GM12878 (cell line): ENCODE measurements at regions of chr2 and their contacts with region 1.

Region 1: DNA sequence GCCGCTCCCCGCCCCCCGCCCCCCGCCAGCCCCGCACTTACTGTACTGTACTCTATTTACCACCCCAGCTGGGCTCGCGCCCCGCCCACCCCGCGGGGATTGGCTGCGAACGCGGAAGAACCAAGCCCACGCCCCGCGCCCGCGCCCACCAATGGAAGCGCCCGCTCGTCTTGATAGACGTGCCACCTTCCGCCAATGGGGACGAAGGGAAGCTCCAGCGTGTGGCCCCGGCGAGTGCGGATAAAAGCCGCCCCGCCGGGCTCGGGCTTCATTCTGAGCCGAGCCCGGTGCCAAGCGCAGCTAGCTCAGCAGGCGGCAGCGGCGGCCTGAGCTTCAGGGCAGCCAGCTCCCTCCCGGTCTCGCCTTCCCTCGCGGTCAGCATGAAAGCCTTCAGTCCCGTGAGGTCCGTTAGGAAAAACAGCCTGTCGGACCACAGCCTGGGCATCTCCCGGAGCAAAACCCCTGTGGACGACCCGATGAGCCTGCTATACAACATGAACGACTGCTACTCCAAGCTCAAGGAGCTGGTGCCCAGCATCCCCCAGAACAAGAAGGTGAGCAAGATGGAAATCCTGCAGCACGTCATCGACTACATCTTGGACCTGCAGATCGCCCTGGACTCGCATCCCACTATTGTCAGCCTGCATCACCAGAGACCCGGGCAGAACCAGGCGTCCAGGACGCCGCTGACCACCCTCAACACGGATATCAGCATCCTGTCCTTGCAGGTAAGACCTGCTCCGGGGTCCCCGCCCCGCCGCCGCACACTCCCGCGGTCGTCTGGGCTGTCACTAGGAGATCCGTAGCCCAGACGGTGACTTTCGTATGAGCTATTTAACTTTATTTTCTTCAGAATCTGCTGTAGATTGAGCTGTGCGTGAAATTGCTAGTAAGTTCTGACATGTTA is at the start of gene ID2:
- DNase-seq: peak; percentile 88
- ATAC-seq: peak; percentile 64
- H3K4me3 ChIP-seq: peak within 1 kb of the TSS; percentile 80
- H3K27ac ChIP-seq: peak within 1 kb of the TSS; percentile 71
- H3K4me1 ChIP-seq: peaks cover 23% of the 10 kb centered on the region
- H3K27me3 ChIP-seq: peaks cover 0 to 8% of the 10 kb centered on the region in 2 experiments; a peak in 1 of 4 replicates
- CTCF ChIP-seq: no peak
- EP300 ChIP-seq: no peak
- POLR2A ChIP-seq: peak; percentile 99
- RAD21 ChIP-seq: no peak
- polyA plus RNA-seq, gene ID2: 77.3 to 82.5 TPM

Region 2: GRCh38 chr2:7097348-7097895 is 1584.6 kb before region 1 on chr2:
- CTCF ChIA-PET with region 1: no interaction called
- POLR2A ChIA-PET with region 1: no interaction called
- RAD21 ChIA-PET with region 1: no interaction called
- SMC1A ChIA-PET with region 1: no interaction called
- in situ Hi-C with region 1: loop called (anchors 10 kb)
- intact Hi-C with region 1: loop called (anchors 5 kb)
- DNase-seq: peak; percentile 35
- ATAC-seq: peak; percentile 98
- H3K4me3 ChIP-seq: peak overlapping the region; percentile 48; the same call in 1 of the 2 replicates
- H3K27ac ChIP-seq: no peak overlapping the region
- H3K4me1 ChIP-seq: peaks cover 4% of the 10 kb centered on the region; the same call in 1 of the 2 replicates
- H3K27me3 ChIP-seq: no peaks in the 10 kb centered on the region
- CTCF ChIP-seq: peak; percentile 97 to 99 (median 98); a peak in 5 of 6 replicates
- EP300 ChIP-seq: no peak
- POLR2A ChIP-seq: no peak
- RAD21 ChIP-seq: peak; percentile 84

Region 3: GRCh38 chr2:8004250-8004681 is 677.8 kb before region 1 on chr2:
- CTCF ChIA-PET with region 1: no interaction called
- POLR2A ChIA-PET with region 1: no interaction called
- RAD21 ChIA-PET with region 1: no interaction called
- SMC1A ChIA-PET with region 1: no interaction called
- in situ Hi-C with region 1: loop called (anchors 5 kb)
- intact Hi-C with region 1: loop called (anchors 5 kb)
- DNase-seq: no peak
- ATAC-seq: peak; percentile 46
- H3K4me3 ChIP-seq: no peak overlapping the region
- H3K27ac ChIP-seq: no peak overlapping the region
- H3K4me1 ChIP-seq: peaks cover 4% of the 10 kb centered on the region; the same call in 1 of the 2 replicates
- H3K27me3 ChIP-seq: no peaks in the 10 kb centered on the region
- CTCF ChIP-seq: no peak
- EP300 ChIP-seq: peak; percentile 69 to 79; a peak in 2 of 4 replicates
- POLR2A ChIP-seq: no peak
- RAD21 ChIP-seq: no peak

Region 4: GRCh38 chr2:8312861-8313830 is 368.9 kb before region 1 on chr2:
- CTCF ChIA-PET with region 1: interaction called, 3 read pairs
- POLR2A ChIA-PET with region 1: interaction called, 8 read pairs
- RAD21 ChIA-PET with region 1: interaction called, 26 read pairs
- SMC1A ChIA-PET with region 1: interaction called, 9 read pairs
- in situ Hi-C with region 1: no loop called
- intact Hi-C with region 1: loop called (anchors 1 kb)
- DNase-seq: peak; percentile 96
- ATAC-seq: peak; percentile 81
- H3K4me3 ChIP-seq: no peak overlapping the region; the same call in 1 of the 2 replicates
- H3K27ac ChIP-seq: peak overlapping the region; percentile 72
- H3K4me1 ChIP-seq: peaks cover 53% of the 10 kb centered on the region
- H3K27me3 ChIP-seq: no peaks in the 10 kb centered on the region
- CTCF ChIP-seq: no peak
- EP300 ChIP-seq: peak; percentile 46 to 86; a peak in 3 of 4 replicates
- POLR2A ChIP-seq: no peak
- RAD21 ChIP-seq: peak; percentile 29

Region 5: DNA sequence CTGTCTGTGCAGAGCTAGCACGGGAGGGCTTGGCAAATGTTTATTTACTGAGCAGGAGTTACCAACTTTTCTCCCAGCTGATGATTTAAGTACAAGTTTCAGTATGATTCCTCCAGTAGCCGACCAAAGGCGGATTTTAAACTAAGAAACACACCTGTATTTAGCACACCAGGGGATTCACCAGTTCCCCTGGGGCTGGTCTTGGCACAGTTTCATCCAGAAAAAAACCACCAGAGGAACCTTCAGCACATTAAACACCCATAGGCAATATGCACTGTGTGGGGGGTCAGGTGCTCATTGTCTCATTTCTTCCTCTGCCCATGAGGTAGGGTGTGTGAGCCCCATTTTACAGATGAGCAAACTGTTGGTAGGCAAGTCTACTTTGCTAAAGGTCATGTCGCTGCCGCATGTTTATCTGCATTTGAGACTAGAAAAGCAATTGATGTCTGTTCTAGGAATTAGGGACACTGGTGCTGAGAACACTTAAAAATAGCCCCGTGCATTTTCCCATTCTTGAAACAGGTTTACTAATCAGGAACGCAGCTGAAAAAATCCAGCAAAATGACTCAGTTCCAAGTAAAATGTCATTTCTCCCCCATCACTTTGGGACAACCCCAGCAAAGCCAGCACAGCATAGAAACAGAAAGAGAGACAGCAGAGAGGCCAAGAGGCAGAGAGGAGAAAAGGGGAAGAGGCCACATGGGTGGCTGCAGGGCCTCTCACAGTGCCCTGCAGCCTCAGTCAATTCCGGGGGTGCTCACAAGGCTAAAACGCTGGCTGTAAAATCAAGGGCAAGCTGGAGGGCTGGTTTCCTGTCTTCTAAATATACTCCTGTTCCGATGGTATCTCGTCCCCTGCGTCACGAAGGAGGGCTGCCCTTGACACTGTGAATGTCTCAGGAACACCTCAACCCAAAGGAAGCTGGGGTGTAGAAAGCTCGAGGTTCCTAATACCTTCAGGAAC is 167.0 kb before region 1 on chr2:
- CTCF ChIA-PET with region 1: interaction called, 21 read pairs
- POLR2A ChIA-PET with region 1: interaction called, 98 read pairs
- RAD21 ChIA-PET with region 1: interaction called, 71 read pairs
- SMC1A ChIA-PET with region 1: interaction called, 43 read pairs
- in situ Hi-C with region 1: no loop called
- intact Hi-C with region 1: no loop called
- DNase-seq: peak; percentile 99
- ATAC-seq: peak; percentile 82
- H3K4me3 ChIP-seq: peak overlapping the region; percentile 51; the same call in 1 of the 2 replicates
- H3K27ac ChIP-seq: peak overlapping the region; percentile 93
- H3K4me1 ChIP-seq: peaks cover 46% of the 10 kb centered on the region
- H3K27me3 ChIP-seq: no peaks in the 10 kb centered on the region
- CTCF ChIP-seq: no peak
- EP300 ChIP-seq: peak; percentile 76 to 95; a peak in 3 of 4 replicates
- POLR2A ChIP-seq: no peak
- RAD21 ChIP-seq: peak; percentile 36; the same call in 1 of the 2 replicates

Region 6: DNA sequence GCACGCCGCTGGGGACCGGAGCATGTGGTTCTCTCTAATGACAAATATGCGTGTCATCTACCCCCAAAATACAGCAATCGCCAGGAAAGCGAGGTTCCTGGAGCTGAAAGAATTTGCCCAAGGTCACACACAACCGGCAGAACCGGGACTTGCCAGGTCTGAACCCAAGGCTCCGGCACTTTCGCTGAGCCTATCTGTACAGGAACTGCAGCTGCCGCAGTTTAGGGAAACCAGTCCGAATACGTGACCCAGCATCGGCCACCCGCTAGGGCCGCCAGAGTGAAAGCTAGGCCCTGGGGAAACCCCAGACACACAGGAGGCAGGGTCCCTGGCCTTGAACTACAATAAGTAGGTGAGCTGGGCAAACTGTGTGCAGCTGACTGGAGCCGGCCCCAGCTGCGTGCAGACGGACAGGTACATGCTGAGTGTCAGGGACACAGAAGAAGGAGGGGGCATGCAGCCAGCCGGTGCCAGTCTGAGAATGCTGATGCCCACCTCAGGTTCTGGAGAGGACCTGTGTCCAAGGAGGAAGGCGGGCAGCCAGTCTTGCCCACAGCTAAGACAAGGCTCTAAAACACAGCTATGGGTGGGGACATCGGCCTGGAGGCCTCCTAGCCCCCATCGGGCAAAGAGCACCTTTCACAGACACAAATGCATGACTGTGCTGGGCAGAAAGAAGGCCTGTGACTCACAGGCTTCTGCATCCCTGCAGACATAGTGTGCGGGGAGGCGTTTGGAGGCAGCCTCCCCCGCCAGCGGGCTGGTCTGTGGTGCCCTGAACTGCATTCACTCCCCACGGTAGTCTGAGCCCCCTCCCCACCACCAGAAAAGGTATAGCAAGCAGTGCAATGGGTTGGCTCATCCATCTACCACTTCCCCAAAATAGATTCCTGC is 107.6 kb before region 1 on chr2:
- CTCF ChIA-PET with region 1: interaction called, 24 read pairs
- POLR2A ChIA-PET with region 1: interaction called, 73 read pairs
- RAD21 ChIA-PET with region 1: interaction called, 97 read pairs
- SMC1A ChIA-PET with region 1: interaction called, 57 read pairs
- in situ Hi-C with region 1: no loop called
- intact Hi-C with region 1: loop called (anchors 1 kb)
- DNase-seq: no peak
- ATAC-seq: peak; percentile 77
- H3K4me3 ChIP-seq: peak overlapping the region; percentile 52; the same call in 1 of the 2 replicates
- H3K27ac ChIP-seq: peak overlapping the region; percentile 51
- H3K4me1 ChIP-seq: peaks cover 46% of the 10 kb centered on the region
- H3K27me3 ChIP-seq: no peaks in the 10 kb centered on the region
- CTCF ChIP-seq: 0 out of 6 replicates have a peak, but pooled peaks of 1 of the 3 experiments have one; percentile 9
- EP300 ChIP-seq: no peak
- POLR2A ChIP-seq: no peak
- RAD21 ChIP-seq: 0 out of 2 replicates have a peak, but pooled peaks have one; percentile 12

Region 7: DNA sequence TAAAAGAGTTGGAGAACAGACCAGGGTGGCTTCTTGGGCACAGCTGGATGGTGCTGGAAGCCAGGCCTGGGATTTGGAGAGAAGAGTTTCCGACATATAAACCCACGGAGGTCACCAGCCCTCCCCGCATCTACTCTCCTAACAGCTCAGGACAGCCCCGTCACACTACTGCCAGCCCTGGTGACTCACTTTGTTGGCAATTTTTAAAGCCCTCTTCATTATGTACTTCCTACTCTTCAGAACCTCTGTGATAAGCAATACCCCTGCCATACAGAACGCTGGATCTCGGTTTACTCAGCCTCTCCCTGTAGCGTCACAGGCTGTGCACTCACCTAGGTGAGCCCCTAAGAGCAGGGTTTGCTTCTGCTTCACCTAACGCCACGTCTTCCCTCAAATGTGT is 47.9 kb after region 1 on chr2:
- CTCF ChIA-PET with region 1: no interaction called
- POLR2A ChIA-PET with region 1: no interaction called
- RAD21 ChIA-PET with region 1: no interaction called
- SMC1A ChIA-PET with region 1: no interaction called
- in situ Hi-C with region 1: no loop called
- intact Hi-C with region 1: no loop called
- DNase-seq: no peak
- ATAC-seq: no peak
- H3K4me3 ChIP-seq: no peak overlapping the region
- H3K27ac ChIP-seq: no peak overlapping the region
- H3K4me1 ChIP-seq: no peaks in the 10 kb centered on the region
- H3K27me3 ChIP-seq: no peaks in the 10 kb centered on the region
- CTCF ChIP-seq: no peak
- EP300 ChIP-seq: no peak
- POLR2A ChIP-seq: no peak
- RAD21 ChIP-seq: no peak

Region 8: GRCh38 chr2:8986327-8986976 is 304.4 kb after region 1 on chr2:
- CTCF ChIA-PET with region 1: no interaction called
- POLR2A ChIA-PET with region 1: interaction called, 10 read pairs
- RAD21 ChIA-PET with region 1: no interaction called
- SMC1A ChIA-PET with region 1: no interaction called
- in situ Hi-C with region 1: no loop called
- intact Hi-C with region 1: no loop called
- DNase-seq: no peak
- ATAC-seq: peak; percentile 65
- H3K4me3 ChIP-seq: no peak overlapping the region
- H3K27ac ChIP-seq: no peak overlapping the region
- H3K4me1 ChIP-seq: peaks cover 23% of the 10 kb centered on the region
- H3K27me3 ChIP-seq: no peaks in the 10 kb centered on the region
- CTCF ChIP-seq: peak; percentile 38 to 69 (median 52); a peak in 5 of 6 replicates
- EP300 ChIP-seq: no peak
- POLR2A ChIP-seq: no peak
- RAD21 ChIP-seq: 0 out of 2 replicates have a peak, but pooled peaks have one; percentile 10

Region 9: GRCh38 chr2:9165625-9166024 is 483.6 kb after region 1 on chr2:
- CTCF ChIA-PET with region 1: no interaction called
- POLR2A ChIA-PET with region 1: no interaction called
- RAD21 ChIA-PET with region 1: no interaction called
- SMC1A ChIA-PET with region 1: no interaction called
- in situ Hi-C with region 1: no loop called
- intact Hi-C with region 1: no loop called
- DNase-seq: no peak
- ATAC-seq: no peak
- H3K4me3 ChIP-seq: no peak overlapping the region
- H3K27ac ChIP-seq: no peak overlapping the region
- H3K4me1 ChIP-seq: no peaks in the 10 kb centered on the region
- H3K27me3 ChIP-seq: no peaks in the 10 kb centered on the region; a peak in 1 of 4 replicates
- CTCF ChIP-seq: no peak
- EP300 ChIP-seq: no peak
- POLR2A ChIP-seq: no peak
- RAD21 ChIP-seq: no peak